CD8-positive, alpha-beta memory T cell (primary cell): ENCODE measurements at regions of chr12 and their contacts with region 1.

Region 1: DNA sequence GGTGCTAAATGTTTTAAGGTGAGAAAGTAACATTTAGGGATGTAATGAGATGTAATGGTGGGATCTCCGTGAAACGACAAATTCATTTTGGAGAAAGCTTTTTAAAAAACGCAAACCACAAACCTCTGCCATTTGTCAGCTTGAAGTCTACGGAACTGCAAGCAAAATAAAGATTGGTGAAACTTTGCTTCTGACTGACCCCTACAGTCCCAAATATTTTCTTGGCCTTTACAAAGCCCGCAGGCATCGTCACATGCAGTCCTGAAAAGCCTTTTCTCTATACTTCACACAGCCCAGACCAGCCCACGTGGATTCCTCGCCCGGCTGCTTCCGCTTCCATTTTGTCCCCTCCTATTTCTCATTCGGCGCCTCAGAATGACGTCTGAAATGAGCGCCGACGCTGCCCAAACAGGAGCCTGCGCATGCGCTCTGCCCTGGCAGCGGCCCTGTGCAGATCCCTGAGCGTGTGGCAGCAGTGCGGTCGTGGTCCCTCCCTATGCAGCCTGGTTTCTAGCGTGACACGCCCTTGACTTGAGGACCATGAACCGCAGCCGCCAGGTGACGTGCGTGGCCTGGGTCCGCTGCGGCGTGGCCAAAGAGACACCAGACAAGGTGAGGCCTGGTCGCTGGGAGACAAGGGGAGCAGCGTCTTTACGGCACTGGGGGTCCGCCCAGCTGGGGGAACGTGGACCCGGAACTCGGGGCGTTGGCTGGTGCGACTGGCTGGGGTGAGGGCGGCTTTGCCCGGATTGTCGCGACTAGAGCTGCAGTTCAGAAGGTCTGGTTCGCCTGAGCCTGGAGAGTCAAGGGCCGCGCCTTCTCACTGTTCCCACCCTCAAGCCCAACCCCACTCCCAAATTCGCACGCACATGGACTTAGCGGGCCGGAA is at the start of gene PWP1:
- DNase-seq: peak; percentile 93 to 96 (median 95)
- H3K4me3 ChIP-seq: peak within 1 kb of the TSS; percentile 83
- H3K4me3 Mint-ChIP-seq: peak within 1 kb of the TSS; percentile 87 to 98 (median 96)
- H3K27ac ChIP-seq: peak within 1 kb of the TSS; percentile 86
- H3K27ac Mint-ChIP-seq: peak within 1 kb of the TSS; percentile 91 to 99 (median 98)
- H3K4me1 ChIP-seq: peaks cover 23% of the 10 kb centered on the region
- H3K4me1 Mint-ChIP-seq: peaks cover 23 to 39% (median 36%) of the 10 kb centered on the region in 3 donors
- H3K27me3 ChIP-seq: no peaks in the 10 kb centered on the region
- H3K27me3 Mint-ChIP-seq: peaks cover 0 to 1% of the 10 kb centered on the region in 2 donors
- total RNA-seq, gene PWP1: 72.3 to 80.2 TPM

Region 2: GRCh38 chr12:107632246-107632645 is 53.4 kb before region 1 on chr12:
- CTCF ChIA-PET with region 1: no interaction called
- POLR2A ChIA-PET with region 1: no interaction called
- DNase-seq: no peak
- H3K4me3 ChIP-seq: no peak overlapping the region
- H3K4me3 Mint-ChIP-seq: no peak overlapping the region
- H3K27ac ChIP-seq: no peak overlapping the region
- H3K27ac Mint-ChIP-seq: no peak overlapping the region
- H3K4me1 ChIP-seq: no peaks in the 10 kb centered on the region
- H3K4me1 Mint-ChIP-seq: no peaks in the 10 kb centered on the region
- H3K27me3 ChIP-seq: no peaks in the 10 kb centered on the region
- H3K27me3 Mint-ChIP-seq: peaks cover 0 to 2% of the 10 kb centered on the region in 2 donors

Region 3: GRCh38 chr12:107645630-107646333 is 39.8 kb before region 1 on chr12:
- CTCF ChIA-PET with region 1: no interaction called
- POLR2A ChIA-PET with region 1: no interaction called
- DNase-seq: no peak
- H3K4me3 ChIP-seq: no peak overlapping the region
- H3K4me3 Mint-ChIP-seq: no peak overlapping the region
- H3K27ac ChIP-seq: no peak overlapping the region
- H3K27ac Mint-ChIP-seq: no peak overlapping the region
- H3K4me1 ChIP-seq: no peaks in the 10 kb centered on the region
- H3K4me1 Mint-ChIP-seq: no peaks in the 10 kb centered on the region
- H3K27me3 ChIP-seq: no peaks in the 10 kb centered on the region
- H3K27me3 Mint-ChIP-seq: peaks cover 0 to 2% of the 10 kb centered on the region in 2 donors

Region 4: GRCh38 chr12:107660235-107660634 is 25.4 kb before region 1 on chr12:
- CTCF ChIA-PET with region 1: no interaction called
- POLR2A ChIA-PET with region 1: no interaction called
- DNase-seq: no peak
- H3K4me3 ChIP-seq: no peak overlapping the region
- H3K4me3 Mint-ChIP-seq: no peak overlapping the region
- H3K27ac ChIP-seq: no peak overlapping the region
- H3K27ac Mint-ChIP-seq: peak overlapping the region in 1 of 8 donors; percentile 41
- H3K4me1 ChIP-seq: no peaks in the 10 kb centered on the region
- H3K4me1 Mint-ChIP-seq: peaks cover 0 to 2% (median 0%) of the 10 kb centered on the region in 3 donors
- H3K27me3 ChIP-seq: no peaks in the 10 kb centered on the region
- H3K27me3 Mint-ChIP-seq: peaks cover 5 to 9% of the 10 kb centered on the region in 2 donors

Region 5: DNA sequence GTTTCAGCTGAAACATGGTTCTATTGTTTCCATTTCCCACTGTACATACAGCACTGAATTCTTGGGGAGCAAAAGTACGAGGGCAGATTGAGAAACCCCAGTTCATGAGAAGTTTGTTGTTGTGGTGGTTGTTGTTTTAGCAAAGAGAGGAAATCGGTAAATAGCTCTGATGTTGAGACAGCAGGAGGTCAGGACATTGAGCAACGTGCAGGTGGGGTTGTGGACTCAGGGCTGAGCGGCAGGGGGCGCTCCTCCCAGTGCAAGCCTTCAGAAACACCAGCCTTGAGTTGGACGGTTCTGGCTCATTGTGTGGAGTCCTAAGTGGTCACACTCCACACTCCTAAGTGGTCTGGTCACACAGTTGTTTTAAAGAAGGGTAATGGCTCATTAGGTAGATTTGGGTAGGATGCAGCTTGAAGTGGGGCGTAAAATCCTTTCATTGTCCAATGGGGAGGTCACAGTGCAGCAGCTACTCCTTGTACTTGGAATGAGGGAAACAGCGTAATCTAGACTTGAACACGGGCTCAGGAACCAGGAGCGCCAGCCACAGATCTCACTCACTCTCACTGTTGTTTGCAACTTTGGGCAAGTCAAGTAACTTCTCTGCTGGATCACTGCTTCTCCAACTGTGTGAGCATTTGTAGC is 14.5 kb before region 1 on chr12:
- CTCF ChIA-PET with region 1: interaction called, 12 read pairs
- POLR2A ChIA-PET with region 1: interaction called, 6 read pairs
- DNase-seq: peak in 1 of 5 donors; percentile 7
- H3K4me3 ChIP-seq: no peak overlapping the region
- H3K4me3 Mint-ChIP-seq: no peak overlapping the region
- H3K27ac ChIP-seq: no peak overlapping the region
- H3K27ac Mint-ChIP-seq: peak overlapping the region in 2 of 8 donors; percentile 20 to 43
- H3K4me1 ChIP-seq: no peaks in the 10 kb centered on the region
- H3K4me1 Mint-ChIP-seq: peaks cover 2 to 5% (median 5%) of the 10 kb centered on the region in 3 donors
- H3K27me3 ChIP-seq: no peaks in the 10 kb centered on the region
- H3K27me3 Mint-ChIP-seq: peaks cover 14 to 40% of the 10 kb centered on the region in 2 donors

Region 6: DNA sequence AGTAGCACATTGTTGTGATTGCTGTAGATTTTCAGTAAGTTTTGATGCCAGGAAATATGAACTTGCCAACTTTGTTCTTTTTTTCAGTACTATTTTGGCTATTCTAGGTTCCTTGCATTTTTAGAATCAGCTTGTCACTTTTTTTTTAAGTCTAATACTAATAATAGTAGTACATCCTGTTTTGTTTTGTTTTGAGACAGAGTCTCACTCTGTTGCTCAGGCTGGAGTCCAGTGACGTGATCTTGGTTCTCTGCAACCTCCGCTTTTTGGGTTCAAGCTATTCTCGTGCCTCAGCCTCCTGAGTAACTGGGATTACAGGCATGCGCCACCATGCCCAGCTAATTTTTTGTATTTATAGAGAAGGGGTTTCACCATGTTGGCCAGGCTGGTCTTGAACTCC is 16.5 kb after region 1 on chr12:
- CTCF ChIA-PET with region 1: interaction called, 10 read pairs
- POLR2A ChIA-PET with region 1: no interaction called
- DNase-seq: no peak
- H3K4me3 ChIP-seq: no peak overlapping the region
- H3K4me3 Mint-ChIP-seq: no peak overlapping the region
- H3K27ac ChIP-seq: no peak overlapping the region
- H3K27ac Mint-ChIP-seq: no peak overlapping the region
- H3K4me1 ChIP-seq: no peaks in the 10 kb centered on the region
- H3K4me1 Mint-ChIP-seq: peaks cover 0 to 10% (median 0%) of the 10 kb centered on the region in 3 donors
- H3K27me3 ChIP-seq: no peaks in the 10 kb centered on the region
- H3K27me3 Mint-ChIP-seq: no peaks in the 10 kb centered on the region